Caco-2 (cell line): ENCODE measurements at regions of chr12 and their contacts with region 1.

Region 1: GRCh38 chr12:102816816-102817434 is 100.1 kb downstream of the PAH start:
- DNase-seq: peak in 1 of 2 experiments; percentile 24
- H3K4me3 ChIP-seq: no peak overlapping the region
- H3K4me3 Mint-ChIP-seq: no peak overlapping the region
- H3K27ac Mint-ChIP-seq: no peak overlapping the region
- H3K4me1 ChIP-seq: no peaks in the 10 kb centered on the region
- H3K4me1 Mint-ChIP-seq: no peaks in the 10 kb centered on the region
- H3K27me3 ChIP-seq: no peaks in the 10 kb centered on the region
- H3K27me3 Mint-ChIP-seq: peaks cover 19% of the 10 kb centered on the region
- CTCF ChIP-seq: peak; percentile 70 to 71

Region 2: GRCh38 chr12:103652797-103653196 is 835.9 kb after region 1 on chr12:
- CTCF ChIA-PET with region 1: no interaction called
- POLR2A ChIA-PET with region 1: interaction called, 10 read pairs
- intact Hi-C with region 1: no loop called
- DNase-seq: no peak
- H3K4me3 ChIP-seq: no peak overlapping the region
- H3K4me3 Mint-ChIP-seq: no peak overlapping the region
- H3K27ac Mint-ChIP-seq: no peak overlapping the region
- H3K4me1 ChIP-seq: no peaks in the 10 kb centered on the region
- H3K4me1 Mint-ChIP-seq: peaks cover 8% of the 10 kb centered on the region
- H3K27me3 ChIP-seq: peaks cover 1% of the 10 kb centered on the region; the same call in 1 of the 2 replicates
- H3K27me3 Mint-ChIP-seq: no peaks in the 10 kb centered on the region
- CTCF ChIP-seq: no peak